ENCODE measurements at regions of chr16 and their contacts with region 1.

Region 1: GRCh38 chr16:81403616-81404373 is 40.8 kb upstream of the CMIP start:
- DNase-seq: peak; percentile 91
- H3K4me3 ChIP-seq: peak overlapping the region in 2 of 4 donors; percentile 24 to 36
- H3K27ac ChIP-seq: no peak overlapping the region
- H3K4me1 ChIP-seq: peaks cover 3 to 9% (median 6%) of the 10 kb centered on the region in 4 donors
- H3K27me3 ChIP-seq: no peaks in the 10 kb centered on the region
- CTCF ChIP-seq: peak; percentile 92 to 97 (median 97)
- EP300 ChIP-seq: no peak
- POLR2A ChIP-seq: no peak

Region 2: GRCh38 chr16:81077076-81077940 is 326.5 kb before region 1 on chr16 and contains the start of gene C16orf46:
- in situ Hi-C with region 1: no loop called
- intact Hi-C with region 1: no loop called
- DNase-seq: peak; percentile 99
- H3K4me3 ChIP-seq: peak within 1 kb of the TSS; percentile 48 to 76 (median 66)
- H3K27ac ChIP-seq: peak within 1 kb of the TSS; percentile 92 to 97 (median 95)
- H3K4me1 ChIP-seq: peaks cover 0 to 10% (median 5%) of the 10 kb centered on the region in 4 donors
- H3K27me3 ChIP-seq: no peaks in the 10 kb centered on the region
- CTCF ChIP-seq: peak in 1 of 5 experiments; percentile 16
- EP300 ChIP-seq: no peak
- POLR2A ChIP-seq: peak; percentile 91
- total RNA-seq, gene C16orf46: 0.32 to 5.6 TPM in 2 of 4 donors, not detected in the others

Region 3: GRCh38 chr16:81616321-81617055 is 212.7 kb after region 1 on chr16:
- in situ Hi-C with region 1: loop called in 1 of 4 experiments (anchors 25 kb)
- intact Hi-C with region 1: loop called (anchors 10 kb)
- DNase-seq: peak; percentile 77
- H3K4me3 ChIP-seq: no peak overlapping the region
- H3K27ac ChIP-seq: peak overlapping the region; percentile 39 to 72 (median 48)
- H3K4me1 ChIP-seq: peaks cover 11 to 21% (median 14%) of the 10 kb centered on the region in 4 donors
- H3K27me3 ChIP-seq: no peaks in the 10 kb centered on the region
- CTCF ChIP-seq: no peak
- EP300 ChIP-seq: no peak
- POLR2A ChIP-seq: no peak

Region 4: DNA sequence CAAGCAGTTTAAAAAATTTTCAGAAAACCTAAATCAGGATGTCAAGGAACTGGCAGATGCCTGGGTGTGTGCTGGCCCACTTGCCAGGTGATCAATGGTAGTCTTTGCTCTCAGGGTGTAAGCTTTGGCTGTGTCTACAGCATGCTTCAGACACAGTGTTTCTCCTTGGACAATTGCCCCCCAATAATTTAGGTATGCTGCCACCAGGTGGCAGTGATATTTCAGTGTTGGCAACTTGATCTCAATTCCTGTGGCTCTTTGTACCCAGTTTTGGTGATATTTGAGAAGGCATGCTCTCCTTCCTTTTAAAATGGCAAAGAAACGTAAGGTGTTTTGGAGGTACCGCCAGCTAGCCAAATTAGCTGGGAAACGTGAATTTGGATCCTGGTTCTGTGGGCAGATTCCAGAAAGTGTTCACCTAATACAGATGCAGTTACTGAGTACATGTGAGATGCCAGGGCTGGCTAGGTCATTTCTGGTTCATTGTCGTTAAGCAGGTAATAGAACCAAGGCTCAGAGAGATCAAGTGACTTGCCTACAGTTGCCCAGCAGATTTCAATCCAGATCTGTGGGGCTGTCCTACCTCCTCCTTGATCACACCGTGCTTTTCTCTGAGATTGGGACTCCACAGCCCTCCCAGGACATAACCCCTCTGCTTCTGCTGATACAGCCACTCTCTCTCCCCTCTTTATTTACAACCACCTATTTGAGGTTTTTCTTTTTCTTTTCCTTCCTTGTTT is 219.7 kb after region 1 on chr16:
- in situ Hi-C with region 1: loop called in 1 of 4 experiments (anchors 25 kb)
- intact Hi-C with region 1: loop called (anchors 10 kb)
- DNase-seq: peak; percentile 55
- H3K4me3 ChIP-seq: no peak overlapping the region
- H3K27ac ChIP-seq: no peak overlapping the region
- H3K4me1 ChIP-seq: peaks cover 5 to 12% (median 10%) of the 10 kb centered on the region in 4 donors
- H3K27me3 ChIP-seq: no peaks in the 10 kb centered on the region
- CTCF ChIP-seq: peak; percentile 48 to 69 (median 50)
- EP300 ChIP-seq: no peak
- POLR2A ChIP-seq: no peak